Activated CD4-positive, alpha-beta memory T cell treated with anti-CD3 and anti-CD28 coated beads, Interleukin-2, amount 10 ng/mL, durations not matched to agents 7 days and 5 days (primary cell): ENCODE measurements at regions of chr1 and their contacts with region 1.

Region 1: DNA sequence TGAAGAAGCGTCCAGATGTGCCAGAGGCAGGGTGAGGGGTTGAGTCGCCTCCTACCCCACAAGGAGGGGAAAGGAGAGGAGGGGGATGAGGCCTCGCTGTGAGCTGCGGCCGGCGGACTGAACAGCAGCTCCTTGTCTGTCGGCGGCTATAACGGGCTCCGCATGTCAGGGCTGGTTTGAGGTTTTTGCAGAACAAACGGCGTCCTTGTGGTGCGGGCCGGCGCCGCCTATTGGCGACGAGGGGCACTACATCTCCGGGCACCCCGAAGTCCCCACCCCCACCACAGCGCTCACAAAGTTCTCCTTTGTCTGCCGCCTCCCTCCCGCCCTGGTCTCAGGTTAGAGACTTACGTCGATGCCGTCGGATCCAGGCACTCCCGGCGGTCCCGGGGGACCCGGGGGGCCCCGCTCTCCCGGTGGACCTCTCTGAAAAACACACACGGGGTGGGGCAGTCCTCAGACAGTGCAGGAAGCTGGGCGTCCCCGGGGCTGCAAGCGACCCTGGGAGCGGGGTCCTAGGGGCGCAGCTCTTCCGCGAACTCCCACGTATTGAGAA is 1.8 kb downstream of the COL9A2 start:
- DNase-seq: peak; percentile 85
- H3K4me3 Mint-ChIP-seq: peak overlapping the region; percentile 66
- H3K27ac Mint-ChIP-seq: no peak overlapping the region
- H3K4me1 Mint-ChIP-seq: peaks cover 59% of the 10 kb centered on the region
- H3K27me3 Mint-ChIP-seq: peaks cover 25% of the 10 kb centered on the region

Region 2: DNA sequence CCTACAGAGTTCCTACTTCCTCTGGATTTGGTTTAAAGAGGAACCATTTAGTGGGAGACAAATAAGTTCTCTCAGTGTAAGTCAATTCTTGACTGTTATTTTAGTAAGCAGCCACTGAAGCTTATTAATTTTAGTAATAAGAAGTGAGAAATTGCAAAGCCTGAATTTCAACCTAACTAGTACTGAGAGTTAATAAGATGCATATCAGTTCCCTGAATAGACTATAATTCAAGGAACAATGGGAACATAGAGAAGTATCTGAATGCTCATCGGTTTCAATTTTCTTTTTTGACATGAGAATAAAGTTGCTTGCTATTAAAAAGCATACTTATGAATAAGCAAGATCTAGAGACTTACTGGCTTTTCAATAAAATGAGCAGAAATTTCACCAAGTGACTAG is 210.3 kb before region 1 on chr1:
- CTCF ChIA-PET with region 1: no interaction called
- POLR2A ChIA-PET with region 1: no interaction called
- DNase-seq: no peak
- H3K4me3 Mint-ChIP-seq: no peak overlapping the region
- H3K27ac Mint-ChIP-seq: no peak overlapping the region
- H3K4me1 Mint-ChIP-seq: peaks cover 3% of the 10 kb centered on the region
- H3K27me3 Mint-ChIP-seq: peaks cover 11% of the 10 kb centered on the region

Region 3: GRCh38 chr1:40143891-40144575 is 171.3 kb before region 1 on chr1:
- CTCF ChIA-PET with region 1: interaction called, 67 read pairs
- POLR2A ChIA-PET with region 1: no interaction called
- DNase-seq: peak; percentile 54
- H3K4me3 Mint-ChIP-seq: no peak overlapping the region
- H3K27ac Mint-ChIP-seq: no peak overlapping the region
- H3K4me1 Mint-ChIP-seq: peaks cover 22% of the 10 kb centered on the region
- H3K27me3 Mint-ChIP-seq: peaks cover 39% of the 10 kb centered on the region

Region 4: DNA sequence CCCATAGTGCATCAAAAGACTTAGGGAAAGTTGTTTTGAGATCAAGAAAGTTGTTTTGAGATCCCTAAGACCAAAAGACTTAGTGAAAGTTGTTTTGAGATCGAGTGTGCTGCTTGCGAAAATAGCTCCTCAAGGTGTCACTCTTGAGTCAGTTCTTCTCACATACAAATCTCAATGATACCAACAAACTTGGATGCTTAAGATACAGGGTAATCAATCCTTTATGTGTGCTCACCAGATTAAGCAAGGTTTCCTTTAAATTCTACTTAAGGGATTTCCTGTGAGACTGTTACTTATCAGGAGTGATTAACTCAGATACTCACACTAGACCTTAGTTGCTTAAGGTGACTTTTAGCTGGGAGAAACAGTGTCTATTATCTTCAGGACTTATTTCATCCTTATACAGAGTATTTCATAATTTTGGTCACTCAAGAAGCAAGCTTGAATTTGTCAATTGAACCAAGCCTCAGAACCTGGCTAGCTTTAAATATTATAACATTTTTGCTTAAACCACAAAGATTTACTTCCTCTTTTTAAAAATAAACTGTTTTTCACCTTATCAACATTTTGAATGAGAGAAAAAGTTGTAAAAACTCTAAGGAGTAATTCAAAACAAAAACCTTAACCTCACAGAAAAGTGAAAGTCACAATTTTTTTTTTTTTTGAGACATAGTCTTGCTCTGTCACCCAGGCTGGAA is 162.1 kb before region 1 on chr1:
- CTCF ChIA-PET with region 1: interaction called, 67 read pairs
- POLR2A ChIA-PET with region 1: interaction called, 5 read pairs
- DNase-seq: peak; percentile 37
- H3K4me3 Mint-ChIP-seq: no peak overlapping the region
- H3K27ac Mint-ChIP-seq: no peak overlapping the region
- H3K4me1 Mint-ChIP-seq: peaks cover 6% of the 10 kb centered on the region
- H3K27me3 Mint-ChIP-seq: peaks cover 5% of the 10 kb centered on the region

Region 5: DNA sequence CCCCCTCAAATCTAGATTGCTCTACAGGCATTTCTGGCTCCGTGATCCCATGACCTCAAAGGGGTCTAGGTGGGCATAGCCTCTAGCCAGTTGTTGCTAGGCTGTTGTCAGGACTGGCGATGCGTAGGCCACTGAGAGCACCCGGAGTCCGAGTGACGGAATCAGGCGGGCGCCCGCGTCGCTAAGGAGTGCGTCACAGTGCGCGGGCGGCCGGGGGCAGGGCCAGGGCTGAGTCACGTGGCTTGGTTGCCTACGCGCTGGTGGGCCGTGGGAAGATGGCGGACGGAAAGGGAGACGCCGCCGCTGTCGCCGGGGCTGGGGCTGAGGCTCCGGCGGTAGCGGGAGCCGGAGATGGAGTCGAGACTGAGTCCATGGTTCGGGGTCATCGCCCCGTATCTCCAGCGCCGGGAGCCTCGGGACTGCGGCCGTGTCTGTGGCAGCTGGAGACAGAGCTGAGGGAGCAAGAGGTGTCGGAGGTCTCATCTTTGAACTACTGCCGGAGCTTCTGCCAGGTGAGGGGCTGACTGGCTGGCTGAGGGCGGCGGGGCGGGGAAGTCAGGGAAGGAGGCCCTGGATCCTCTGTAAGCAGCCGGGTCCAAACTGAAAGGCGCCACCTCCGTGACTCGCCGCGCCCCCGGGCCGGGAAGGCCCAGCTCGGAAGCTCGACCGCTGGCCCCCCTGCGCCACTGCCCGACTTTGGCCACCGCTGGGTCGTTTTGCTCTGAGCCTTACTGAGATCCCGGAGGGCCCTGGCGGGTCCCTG is 154.0 kb before region 1 on chr1 and contains the start of gene RLF:
- CTCF ChIA-PET with region 1: interaction called, 9 read pairs
- POLR2A ChIA-PET with region 1: interaction called, 10 read pairs
- DNase-seq: peak; percentile 96
- H3K4me3 Mint-ChIP-seq: no peak within 1 kb of the TSS
- H3K27ac Mint-ChIP-seq: no peak within 1 kb of the TSS
- H3K4me1 Mint-ChIP-seq: peaks cover 5% of the 10 kb centered on the region
- H3K27me3 Mint-ChIP-seq: no peaks in the 10 kb centered on the region
- total RNA-seq, gene RLF: 23.8 to 24.6 TPM